Motor neuron (in vitro differentiated cells): ENCODE measurements at regions of chr16 and their contacts with region 1.

Region 1: DNA sequence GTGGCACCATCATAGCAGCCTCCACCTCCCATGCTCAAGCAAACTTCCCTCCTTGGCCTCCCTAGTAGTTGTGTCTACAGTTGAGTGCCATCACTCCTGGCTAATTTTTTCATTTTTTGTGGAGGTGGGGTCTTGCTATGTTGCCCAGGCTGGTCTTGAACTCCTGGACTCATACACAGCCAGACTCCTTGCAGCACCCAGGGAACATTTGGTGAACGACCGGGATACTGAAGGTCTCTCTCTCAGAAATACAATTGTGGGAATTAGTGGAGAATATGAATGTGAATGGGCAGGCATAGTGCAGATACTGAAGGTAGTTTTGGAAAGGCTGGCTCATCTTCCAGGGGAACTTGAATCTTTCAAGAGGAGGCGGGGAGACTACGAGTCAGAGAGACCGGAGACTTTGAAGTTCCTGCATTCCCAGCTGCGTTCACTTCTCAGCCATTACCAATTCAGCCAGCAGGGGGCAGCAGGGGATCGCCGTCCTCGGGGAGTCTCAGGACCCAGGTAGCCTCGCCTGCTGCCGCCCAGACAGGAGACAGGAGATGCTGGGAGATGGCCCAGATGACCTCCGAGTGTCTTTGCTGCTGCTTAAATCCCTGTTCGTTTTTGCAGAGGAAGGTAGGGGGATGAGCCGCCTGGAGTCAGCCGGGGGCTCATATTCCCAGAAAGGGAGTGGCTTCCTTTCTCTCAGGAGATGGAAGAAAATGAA is 68.6 kb downstream of the HAPSTR1 start:
- ATAC-seq: peak; percentile 78 to 99 (median 90)
- H3K4me3 ChIP-seq: no peak overlapping the region
- H3K27ac ChIP-seq: no peak overlapping the region
- H3K4me1 ChIP-seq: peaks cover 6 to 11% of the 10 kb centered on the region in 2 donors

Region 2: GRCh38 chr16:10172848-10173655 is 1013.1 kb after region 1 on chr16:
- in situ Hi-C with region 1: loop called in 3 of 9 experiments (anchors 25 kb)
- ATAC-seq: no peak
- H3K4me3 ChIP-seq: no peak overlapping the region
- H3K27ac ChIP-seq: no peak overlapping the region
- H3K4me1 ChIP-seq: peaks cover 2 to 4% of the 10 kb centered on the region in 2 donors

Region 3: GRCh38 chr16:10181196-10182162 is 1021.5 kb after region 1 on chr16:
- in situ Hi-C with region 1: loop called in 2 of 9 experiments (anchors 25 kb)
- ATAC-seq: peak; percentile 69 to 90 (median 72)
- H3K4me3 ChIP-seq: peak overlapping the region; percentile 47 to 55 (median 49)
- H3K27ac ChIP-seq: no peak overlapping the region
- H3K4me1 ChIP-seq: peaks cover 6 to 18% of the 10 kb centered on the region in 2 donors

Region 4: DNA sequence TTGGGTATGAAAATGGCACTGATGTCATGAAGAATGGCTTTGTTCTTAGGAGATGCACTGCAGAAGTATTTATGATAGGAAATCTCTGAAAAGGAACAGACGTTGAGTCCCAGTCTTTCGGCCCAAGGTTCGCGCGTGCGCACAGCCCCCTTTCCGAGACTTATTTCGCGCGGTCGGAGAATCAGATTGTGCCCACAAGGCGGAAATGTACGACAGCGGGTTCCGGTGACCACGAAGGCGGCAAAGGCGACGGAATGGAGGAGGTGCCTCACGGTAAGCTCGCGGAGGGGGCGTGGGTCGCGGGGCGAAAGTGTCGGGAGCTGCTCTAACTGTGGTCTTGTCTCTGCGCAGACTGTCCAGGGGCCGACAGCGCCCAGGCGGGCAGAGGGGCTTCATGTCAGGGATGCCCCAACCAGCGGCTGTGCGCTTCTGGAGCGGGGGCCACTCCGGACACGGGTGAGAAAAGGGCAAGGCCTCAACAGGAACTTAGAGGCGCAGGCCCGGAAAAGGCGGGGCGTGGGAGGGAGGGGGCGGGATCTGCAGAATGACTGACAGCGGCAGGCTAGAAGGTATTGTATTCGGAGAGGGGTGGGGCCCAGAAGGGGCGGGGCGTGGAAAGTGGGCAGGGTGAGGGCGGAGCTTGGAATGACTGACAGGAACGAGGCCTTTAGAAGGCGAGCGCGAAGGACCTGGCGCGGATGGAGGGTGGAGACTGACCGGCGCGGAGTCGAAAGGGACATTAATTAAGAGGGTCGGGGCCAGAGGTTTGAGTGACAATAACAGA is 1583.8 kb after region 1 on chr16 and contains the start of gene NUBP1:
- in situ Hi-C with region 1: loop called in 1 of 9 experiments (anchors 25 kb)
- ATAC-seq: peak; percentile 85 to 95 (median 92)
- H3K4me3 ChIP-seq: peak within 1 kb of the TSS; percentile 61 to 80 (median 65)
- H3K27ac ChIP-seq: peak within 1 kb of the TSS; percentile 97
- H3K4me1 ChIP-seq: peaks cover 3 to 8% of the 10 kb centered on the region in 2 donors
- total RNA-seq, gene NUBP1: 14.9 to 42.4 (median 26.4) TPM